ENCODE measurements at regions of chr16 and their contacts with region 1.

Region 1: GRCh38 chr16:86072328-86073102 is 173.6 kb downstream of the IRF8 start:
- DNase-seq: peak; percentile 54 to 57
- ATAC-seq: peak in 6 of 8 donors; percentile 48 to 73 (median 58)
- H3K4me3 ChIP-seq: no peak overlapping the region
- H3K27ac ChIP-seq: no peak overlapping the region
- H3K4me1 ChIP-seq: no peaks in the 10 kb centered on the region
- H3K27me3 ChIP-seq: peaks cover 0 to 73% (median 44%) of the 10 kb centered on the region in 7 donors
- CTCF ChIP-seq: peak; percentile 57 to 87 (median 84)

Region 2: GRCh38 chr16:86029131-86029741 is 43.3 kb before region 1 on chr16:
- intact Hi-C with region 1: no loop called
- DNase-seq: peak; percentile 60 to 63
- ATAC-seq: peak; percentile 63 to 82 (median 74)
- H3K4me3 ChIP-seq: no peak overlapping the region
- H3K27ac ChIP-seq: peak overlapping the region in 5 of 10 donors; percentile 16 to 67 (median 45)
- H3K4me1 ChIP-seq: peaks cover 0 to 20% (median 7%) of the 10 kb centered on the region in 9 donors
- H3K27me3 ChIP-seq: peaks cover 0 to 71% (median 44%) of the 10 kb centered on the region in 7 donors
- CTCF ChIP-seq: no peak

Region 3: GRCh38 chr16:86343027-86343787 is 270.7 kb after region 1 on chr16:
- intact Hi-C with region 1: loop called in 3 of 10 experiments (anchors 5 to 10 kb)
- DNase-seq: peak; percentile 41 to 48
- ATAC-seq: peak in 7 of 8 donors; percentile 32 to 85 (median 72)
- H3K4me3 ChIP-seq: peak overlapping the region in 6 of 10 donors; percentile 5 to 28 (median 14)
- H3K27ac ChIP-seq: peak overlapping the region in 6 of 10 donors; percentile 18 to 65 (median 48)
- H3K4me1 ChIP-seq: peaks cover 0 to 18% (median 16%) of the 10 kb centered on the region in 9 donors
- H3K27me3 ChIP-seq: peaks cover 0 to 75% (median 64%) of the 10 kb centered on the region in 7 donors
- CTCF ChIP-seq: no peak

Region 4: DNA sequence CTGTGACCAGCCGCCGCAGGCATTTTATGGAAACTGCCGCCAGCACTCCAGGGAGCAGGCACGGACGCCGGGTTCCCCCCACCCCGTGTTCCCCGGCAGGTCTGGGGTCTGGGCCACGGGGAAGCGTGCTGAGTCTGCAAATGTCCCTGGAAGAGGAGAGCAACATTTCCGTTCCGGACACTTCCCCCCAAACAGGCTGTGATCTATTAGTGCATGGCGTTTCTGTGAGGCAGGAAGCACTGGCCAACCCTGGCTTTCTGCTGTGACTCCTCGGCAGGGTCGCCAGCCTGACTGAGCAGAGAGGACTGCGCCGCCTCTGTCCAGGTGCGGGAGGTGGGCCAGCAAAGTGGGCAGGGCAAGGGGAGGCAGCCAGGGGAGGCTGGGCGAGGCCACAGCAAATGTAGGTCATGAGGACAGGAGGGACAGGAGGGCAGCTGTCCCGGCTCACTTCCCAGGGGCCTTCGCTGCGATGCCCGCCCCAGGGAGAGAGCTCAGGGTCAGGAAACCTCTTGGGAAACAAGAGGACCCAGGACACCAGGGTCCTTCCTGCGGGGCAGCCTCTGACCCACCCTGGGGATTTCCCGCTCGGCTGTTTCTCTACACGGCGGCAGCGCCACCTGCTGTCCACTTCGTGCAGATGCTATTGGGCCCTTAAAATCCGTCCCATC is 447.3 kb after region 1 on chr16:
- intact Hi-C with region 1: loop called (anchors 1 to 2 kb)
- DNase-seq: peak; percentile 40 to 66
- ATAC-seq: peak; percentile 32 to 73 (median 46)
- H3K4me3 ChIP-seq: no peak overlapping the region
- H3K27ac ChIP-seq: no peak overlapping the region
- H3K4me1 ChIP-seq: peaks cover 0 to 29% (median 15%) of the 10 kb centered on the region in 9 donors
- H3K27me3 ChIP-seq: peaks cover 13 to 96% (median 85%) of the 10 kb centered on the region in 7 donors
- CTCF ChIP-seq: peak; percentile 76 to 95 (median 92)